Prostate gland (tissue), 2 donors: ENCODE measurements at regions of chr1 and their contacts with region 1.

Region 1: DNA sequence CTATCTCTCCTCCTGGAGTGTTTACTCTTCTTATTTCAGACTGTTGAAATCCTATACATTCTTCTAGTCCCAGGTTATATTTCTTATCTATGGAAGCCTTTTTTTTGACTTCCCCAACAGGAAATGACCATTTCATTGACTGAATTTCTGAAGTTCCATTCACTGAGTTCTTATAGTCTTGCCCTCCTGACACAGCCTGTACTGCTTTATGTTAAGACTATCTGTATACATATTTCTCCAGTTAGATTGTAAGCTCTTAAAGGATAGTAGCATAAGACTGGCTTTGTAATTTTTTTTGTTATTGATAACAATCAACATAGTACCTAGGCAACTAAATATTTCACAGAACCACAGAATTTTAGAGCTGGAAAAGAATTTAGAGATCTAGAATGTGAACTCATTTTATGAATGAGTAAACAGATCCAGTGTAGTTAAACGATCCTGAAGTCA is 14.9 kb upstream of the MACF1 start:
- DNase-seq: no peak
- H3K4me3 ChIP-seq: no peak overlapping the region
- H3K27ac ChIP-seq: peak overlapping the region in 1 of 2 donors; percentile 20
- H3K4me1 ChIP-seq: peaks cover 2% of the 10 kb centered on the region
- H3K27me3 ChIP-seq: no peaks in the 10 kb centered on the region
- CTCF ChIP-seq: no peak
- POLR2A ChIP-seq: no peak

Region 2: GRCh38 chr1:39051956-39052355 is 137.7 kb before region 1 on chr1:
- intact Hi-C with region 1: no loop called
- DNase-seq: no peak
- H3K4me3 ChIP-seq: no peak overlapping the region
- H3K27ac ChIP-seq: no peak overlapping the region
- H3K4me1 ChIP-seq: no peaks in the 10 kb centered on the region
- H3K27me3 ChIP-seq: no peaks in the 10 kb centered on the region
- CTCF ChIP-seq: no peak
- POLR2A ChIP-seq: no peak

Region 3: DNA sequence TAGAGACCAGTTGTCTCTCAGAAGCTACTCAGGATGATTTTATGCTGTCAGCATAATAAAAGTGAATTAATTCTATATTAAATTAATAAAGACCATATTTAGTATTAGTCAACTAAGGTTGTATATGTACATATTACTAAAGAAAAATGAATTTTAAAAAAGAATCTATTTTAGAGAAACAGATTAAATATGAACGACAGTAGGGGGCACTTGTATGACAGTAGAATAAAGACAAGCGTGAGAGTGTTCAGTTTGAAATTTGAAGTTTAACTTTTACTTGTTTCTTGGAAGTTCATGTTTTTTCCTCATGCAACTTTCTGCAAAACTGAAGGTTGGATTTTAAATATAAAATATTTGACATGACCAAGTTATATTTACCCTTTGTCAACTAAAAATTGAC is 53.0 kb before region 1 on chr1:
- intact Hi-C with region 1: loop called (anchors 5 kb)
- DNase-seq: no peak
- H3K4me3 ChIP-seq: no peak overlapping the region
- H3K27ac ChIP-seq: no peak overlapping the region
- H3K4me1 ChIP-seq: peaks cover 7% of the 10 kb centered on the region
- H3K27me3 ChIP-seq: no peaks in the 10 kb centered on the region
- CTCF ChIP-seq: no peak
- POLR2A ChIP-seq: no peak

Region 4: DNA sequence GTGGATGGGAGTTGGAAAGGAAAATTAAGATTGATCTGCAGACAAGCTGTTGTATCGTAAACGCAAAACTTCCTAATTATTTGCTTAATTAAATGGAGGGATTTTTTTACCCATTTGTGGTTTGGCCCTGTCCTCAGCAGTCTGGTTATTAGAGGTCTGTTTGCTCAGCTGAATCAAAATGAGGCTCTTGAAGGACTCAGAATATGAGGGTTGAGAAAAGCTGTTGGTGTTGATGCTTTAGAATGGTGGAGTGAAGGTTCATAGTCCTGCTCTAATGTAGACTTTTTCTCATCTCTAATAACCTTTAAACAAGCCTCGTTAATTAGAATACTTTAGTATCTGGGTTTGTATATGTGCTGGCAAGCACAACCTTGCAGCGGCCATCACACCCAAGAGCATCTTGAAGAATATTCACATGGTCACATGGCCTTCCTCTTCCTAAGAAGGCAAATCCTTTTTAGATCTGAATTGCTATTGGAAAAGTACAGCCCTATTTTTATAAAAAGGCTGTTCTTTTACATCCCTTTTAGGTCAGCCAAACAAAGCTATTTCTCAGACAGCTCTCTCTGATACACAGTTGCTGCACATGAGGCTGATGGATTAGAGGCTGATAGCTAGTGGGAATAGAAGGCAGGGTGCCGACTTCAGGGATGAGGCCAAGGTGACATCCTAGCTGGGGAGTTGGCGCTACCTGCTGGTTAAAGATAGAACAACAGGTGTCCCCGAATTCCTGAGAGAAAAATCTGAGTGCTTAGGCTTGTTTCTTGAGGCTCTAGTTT is 68.7 kb after region 1 on chr1:
- intact Hi-C with region 1: loop called (anchors 5 kb)
- DNase-seq: peak; percentile 68
- H3K4me3 ChIP-seq: no peak overlapping the region
- H3K27ac ChIP-seq: no peak overlapping the region
- H3K4me1 ChIP-seq: no peaks in the 10 kb centered on the region
- H3K27me3 ChIP-seq: no peaks in the 10 kb centered on the region
- CTCF ChIP-seq: peak; percentile 48 to 92 (median 84)
- POLR2A ChIP-seq: no peak

Region 5: DNA sequence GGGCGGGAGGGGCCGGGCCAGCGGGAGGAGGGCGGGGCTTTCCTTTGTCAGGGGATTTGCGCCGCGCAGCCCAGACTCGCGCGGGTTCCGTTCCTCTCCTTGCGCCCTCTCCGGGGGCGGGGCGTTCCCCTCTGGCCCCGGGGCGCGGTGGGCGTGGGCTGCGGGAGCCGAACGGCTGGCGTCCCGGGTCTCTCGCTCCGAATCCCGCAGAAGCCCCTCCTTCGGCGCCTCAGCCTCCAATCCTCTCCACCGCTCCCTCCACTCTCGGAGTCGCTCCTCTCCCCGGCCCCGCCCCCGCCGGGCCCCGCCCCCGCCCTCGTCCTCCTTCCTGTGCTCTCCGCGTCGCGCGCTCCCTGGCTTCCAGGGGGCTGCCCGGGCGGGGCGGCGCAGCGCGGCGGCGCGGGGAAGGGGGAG is 219.0 kb after region 1 on chr1:
- intact Hi-C with region 1: loop called (anchors 5 kb)
- DNase-seq: peak; percentile 94
- H3K4me3 ChIP-seq: peak overlapping the region; percentile 71 to 79
- H3K27ac ChIP-seq: peak overlapping the region; percentile 90 to 93
- H3K4me1 ChIP-seq: peaks cover 19% of the 10 kb centered on the region
- H3K27me3 ChIP-seq: no peaks in the 10 kb centered on the region
- CTCF ChIP-seq: no peak
- POLR2A ChIP-seq: no peak